ENCODE measurements at regions of chr7 and their contacts with region 1.

Region 1: GRCh38 chr7:16708980-16709379 is 44.6 kb upstream of the TSPAN13 start:
- DNase-seq: peak; percentile 81
- H3K4me3 ChIP-seq: no peak overlapping the region
- H3K27ac ChIP-seq: peak overlapping the region; percentile 92
- H3K4me1 ChIP-seq: peaks cover 58% of the 10 kb centered on the region
- H3K27me3 ChIP-seq: no peaks in the 10 kb centered on the region
- CTCF ChIP-seq: no peak

Region 2: GRCh38 chr7:16645593-16646471 is 63.1 kb before region 1 on chr7 and contains the starts of genes ANKMY2 and BZW2:
- CTCF ChIA-PET with region 1: no interaction called
- POLR2A ChIA-PET with region 1: interaction called, 5 read pairs
- intact Hi-C with region 1: loop called (anchors 2 kb)
- DNase-seq: peak; percentile 98
- H3K4me3 ChIP-seq: peak within 1 kb of the TSS; percentile 92
- H3K27ac ChIP-seq: peak within 1 kb of the TSS; percentile 99
- H3K4me1 ChIP-seq: peaks cover 56% of the 10 kb centered on the region
- H3K27me3 ChIP-seq: no peaks in the 10 kb centered on the region
- CTCF ChIP-seq: no peak
- total RNA-seq, gene ANKMY2: 24.3 and 30.5 TPM in 2 replicates
- total RNA-seq, gene BZW2: 173 and 175 TPM in 2 replicates

Region 3: GRCh38 chr7:16724344-16724743 is 15.4 kb after region 1 on chr7:
- CTCF ChIA-PET with region 1: no interaction called
- POLR2A ChIA-PET with region 1: interaction called, 11 read pairs
- intact Hi-C with region 1: no loop called
- DNase-seq: no peak
- H3K4me3 ChIP-seq: no peak overlapping the region
- H3K27ac ChIP-seq: no peak overlapping the region
- H3K4me1 ChIP-seq: peaks cover 13% of the 10 kb centered on the region
- H3K27me3 ChIP-seq: no peaks in the 10 kb centered on the region
- CTCF ChIP-seq: no peak

Region 4: DNA sequence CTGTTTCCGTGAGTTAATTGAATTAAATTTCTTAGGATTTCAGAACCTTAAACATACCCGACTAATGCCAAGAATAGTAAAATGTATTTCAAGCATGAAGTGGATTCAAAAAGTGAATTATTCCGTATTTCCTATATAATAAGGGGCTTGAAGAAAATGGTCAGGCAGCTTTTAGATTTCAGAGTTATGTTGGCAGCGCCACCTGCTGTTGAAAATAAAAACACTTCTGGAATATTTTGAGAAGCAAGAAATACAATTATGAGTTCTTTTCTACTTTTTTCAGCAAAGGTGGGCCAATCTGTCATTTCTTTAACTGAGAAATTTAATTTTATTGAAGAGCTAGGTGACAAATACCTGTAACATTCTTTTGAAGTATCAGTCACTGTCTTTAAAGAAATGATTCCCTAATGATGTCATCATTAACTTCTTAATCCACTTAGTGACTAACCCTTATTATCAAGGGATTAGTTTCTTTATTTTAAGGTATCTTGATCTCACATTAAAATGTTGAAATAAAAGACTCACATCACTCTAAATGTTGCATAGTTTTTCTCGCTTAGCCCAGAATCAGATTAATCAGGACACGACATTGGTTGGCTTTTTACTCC is 209.4 kb after region 1 on chr7:
- CTCF ChIA-PET with region 1: no interaction called
- POLR2A ChIA-PET with region 1: no interaction called
- intact Hi-C with region 1: loop called (anchors 2 kb)
- DNase-seq: peak; percentile 78
- H3K4me3 ChIP-seq: no peak overlapping the region
- H3K27ac ChIP-seq: no peak overlapping the region
- H3K4me1 ChIP-seq: peaks cover 58% of the 10 kb centered on the region
- H3K27me3 ChIP-seq: no peaks in the 10 kb centered on the region
- CTCF ChIP-seq: peak; percentile 87

Measured in A673 (cell line).